ENCODE measurements at regions of chr2 and their contacts with region 1.

Region 1: GRCh38 chr2:101823347-101823791 is 125.9 kb downstream of the MAP4K4 start:
- DNase-seq: peak; percentile 79
- H3K4me3 ChIP-seq: no peak overlapping the region
- H3K27ac ChIP-seq: peak overlapping the region; percentile 30
- H3K4me1 ChIP-seq: peaks cover 54% of the 10 kb centered on the region
- H3K27me3 ChIP-seq: no peaks in the 10 kb centered on the region
- CTCF ChIP-seq: peak; percentile 54 to 67
- POLR2A ChIP-seq: no peak

Region 2: DNA sequence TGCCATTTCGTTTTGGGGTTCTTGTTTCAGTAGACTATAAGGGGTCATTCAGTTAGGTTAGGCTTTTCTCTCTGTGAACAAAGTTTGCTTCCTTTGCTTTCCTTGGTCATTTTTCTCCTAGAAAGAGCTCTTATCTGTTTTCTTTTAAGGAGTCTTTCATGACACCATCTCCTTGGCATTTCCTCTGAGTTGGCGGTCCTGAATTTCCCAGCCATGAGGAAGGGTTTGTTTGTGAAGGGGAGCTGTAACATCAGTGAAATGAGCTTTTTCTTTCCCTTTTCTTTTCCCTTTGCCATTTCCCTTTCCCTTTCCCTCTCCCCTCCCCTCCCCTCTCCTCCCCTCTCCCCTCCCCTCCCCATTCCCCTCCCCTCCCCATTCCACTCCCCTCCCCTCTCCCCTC is 64.2 kb before region 1 on chr2:
- CTCF ChIA-PET with region 1: interaction called, 7 read pairs
- POLR2A ChIA-PET with region 1: interaction called, 3 read pairs
- dilution Hi-C with region 1: no loop called
- intact Hi-C with region 1: loop called (anchors 2 kb)
- DNase-seq: peak; percentile 95
- H3K4me3 ChIP-seq: no peak overlapping the region
- H3K27ac ChIP-seq: peak overlapping the region; percentile 73
- H3K4me1 ChIP-seq: peaks cover 41% of the 10 kb centered on the region
- H3K27me3 ChIP-seq: no peaks in the 10 kb centered on the region
- CTCF ChIP-seq: no peak
- POLR2A ChIP-seq: no peak

Region 3: GRCh38 chr2:101806123-101806522 is 17.2 kb before region 1 on chr2:
- CTCF ChIA-PET with region 1: interaction called, 8 read pairs
- POLR2A ChIA-PET with region 1: no interaction called
- dilution Hi-C with region 1: no loop called
- intact Hi-C with region 1: loop called (anchors 1 kb)
- DNase-seq: peak; percentile 83
- H3K4me3 ChIP-seq: peak overlapping the region in 1 of 3 experiments; percentile 10
- H3K27ac ChIP-seq: peak overlapping the region; percentile 36
- H3K4me1 ChIP-seq: peaks cover 46% of the 10 kb centered on the region
- H3K27me3 ChIP-seq: no peaks in the 10 kb centered on the region
- CTCF ChIP-seq: no peak
- POLR2A ChIP-seq: no peak

Measured in endothelial cell of umbilical vein (primary cell).